ENCODE measurements at regions of chr20 and their contacts with region 1.

Region 1: GRCh38 chr20:3993109-3993508 is 22.2 kb downstream of the RNF24 start:
- DNase-seq: no peak
- H3K4me3 ChIP-seq: no peak overlapping the region
- H3K27ac ChIP-seq: no peak overlapping the region
- H3K4me1 ChIP-seq: no peaks in the 10 kb centered on the region
- H3K27me3 ChIP-seq: no peaks in the 10 kb centered on the region
- CTCF ChIP-seq: no peak
- POLR2A ChIP-seq: no peak

Region 2: DNA sequence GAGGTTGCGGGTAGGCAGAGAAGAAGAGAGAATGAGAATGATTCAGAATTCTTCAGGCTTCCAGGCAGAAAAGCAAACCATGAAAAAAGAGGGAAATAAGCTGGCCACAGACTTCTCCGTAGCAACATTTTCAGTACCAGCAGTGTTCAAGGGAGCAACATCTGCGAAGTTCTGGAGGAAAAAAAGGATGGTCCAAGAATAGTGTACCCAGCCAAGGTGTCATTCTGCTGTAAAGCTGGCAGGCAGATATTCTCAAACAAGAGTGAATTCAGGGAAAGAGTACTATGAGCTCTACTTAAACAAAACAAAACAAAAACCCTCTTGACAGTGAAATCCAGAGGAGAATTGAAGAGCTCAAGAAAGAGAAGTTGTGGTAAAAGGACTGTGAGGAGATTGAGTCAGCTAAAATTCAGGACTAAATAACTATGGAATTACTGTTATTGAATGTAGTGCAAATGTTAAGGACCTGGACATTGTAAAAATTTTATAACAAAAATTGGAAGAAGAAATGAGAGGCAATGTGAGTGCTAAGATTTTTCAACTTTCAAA is 435.8 kb before region 1 on chr20:
- CTCF ChIA-PET with region 1: no interaction called
- POLR2A ChIA-PET with region 1: no interaction called
- dilution Hi-C with region 1: no loop called
- intact Hi-C with region 1: no loop called
- DNase-seq: no peak
- H3K4me3 ChIP-seq: no peak overlapping the region
- H3K27ac ChIP-seq: no peak overlapping the region
- H3K4me1 ChIP-seq: no peaks in the 10 kb centered on the region
- H3K27me3 ChIP-seq: no peaks in the 10 kb centered on the region
- CTCF ChIP-seq: no peak
- POLR2A ChIP-seq: no peak

Region 3: GRCh38 chr20:3980260-3981131 is 12.6 kb before region 1 on chr20:
- CTCF ChIA-PET with region 1: interaction called, 11 read pairs
- POLR2A ChIA-PET with region 1: no interaction called
- dilution Hi-C with region 1: no loop called
- intact Hi-C with region 1: no loop called
- DNase-seq: peak; percentile 33
- H3K4me3 ChIP-seq: peak overlapping the region in 1 of 3 experiments; percentile 41
- H3K27ac ChIP-seq: peak overlapping the region; percentile 45
- H3K4me1 ChIP-seq: peaks cover 7% of the 10 kb centered on the region
- H3K27me3 ChIP-seq: no peaks in the 10 kb centered on the region
- CTCF ChIP-seq: no peak
- POLR2A ChIP-seq: no peak

Measured in endothelial cell of umbilical vein (primary cell).